CD8-positive, alpha-beta T cell (primary cell): ENCODE measurements at regions of chr10 and their contacts with region 1.

Region 1: DNA sequence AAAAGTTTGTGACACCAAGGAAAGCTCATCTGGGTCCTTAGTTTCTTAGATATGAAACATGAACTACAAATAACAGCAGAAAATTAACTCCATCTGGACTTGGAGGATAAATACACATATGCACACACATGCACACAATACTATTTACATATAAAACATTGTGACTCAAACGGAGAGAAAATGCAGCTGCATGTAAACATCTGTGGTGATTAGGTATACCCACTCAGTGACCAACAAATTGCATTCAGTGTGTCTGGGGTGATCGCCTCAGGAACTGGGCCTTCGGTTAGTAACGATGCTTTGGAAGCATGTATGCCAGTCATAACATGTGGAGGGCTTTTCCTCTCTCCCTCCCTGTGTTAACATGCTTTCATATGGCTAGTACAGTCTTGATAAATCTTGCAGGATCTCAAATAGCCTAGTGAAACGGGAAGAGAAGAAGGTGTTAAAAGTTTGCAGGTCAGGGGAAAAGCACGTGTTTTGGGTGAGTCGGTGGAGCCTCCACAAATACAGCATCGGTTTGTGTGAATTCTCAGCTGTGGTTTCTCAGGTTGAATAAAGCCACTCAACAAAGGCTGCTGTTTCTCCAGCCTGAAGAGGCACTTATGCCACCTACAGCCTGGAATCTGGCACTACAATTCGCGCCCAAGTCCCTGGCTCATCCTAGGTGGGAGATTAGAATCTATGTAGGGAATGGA is 8.7 kb upstream of the GLRX3 start:
- DNase-seq: peak; percentile 16 to 80 (median 50)
- ATAC-seq: peak; percentile 95
- H3K4me3 ChIP-seq: no peak overlapping the region
- H3K4me3 Mint-ChIP-seq: no peak overlapping the region
- H3K27ac ChIP-seq: no peak overlapping the region
- H3K27ac Mint-ChIP-seq: no peak overlapping the region
- H3K4me1 ChIP-seq: peaks cover 4% of the 10 kb centered on the region
- H3K4me1 Mint-ChIP-seq: peaks cover 7% of the 10 kb centered on the region
- H3K27me3 ChIP-seq: no peaks in the 10 kb centered on the region
- H3K27me3 Mint-ChIP-seq: peaks cover 26% of the 10 kb centered on the region
- CTCF ChIP-seq: peak; percentile 75

Region 2: GRCh38 chr10:129580010-129580409 is 547.5 kb before region 1 on chr10:
- CTCF ChIA-PET with region 1: no interaction called
- POLR2A ChIA-PET with region 1: no interaction called
- intact Hi-C with region 1: no loop called
- DNase-seq: no peak
- ATAC-seq: no peak
- H3K4me3 ChIP-seq: no peak overlapping the region
- H3K4me3 Mint-ChIP-seq: no peak overlapping the region
- H3K27ac ChIP-seq: no peak overlapping the region
- H3K27ac Mint-ChIP-seq: no peak overlapping the region
- H3K4me1 ChIP-seq: no peaks in the 10 kb centered on the region
- H3K4me1 Mint-ChIP-seq: peaks cover 19% of the 10 kb centered on the region
- H3K27me3 ChIP-seq: no peaks in the 10 kb centered on the region
- H3K27me3 Mint-ChIP-seq: no peaks in the 10 kb centered on the region
- CTCF ChIP-seq: no peak

Region 3: GRCh38 chr10:129877773-129878371 is 249.6 kb before region 1 on chr10:
- CTCF ChIA-PET with region 1: interaction called, 18 read pairs
- POLR2A ChIA-PET with region 1: no interaction called
- intact Hi-C with region 1: loop called in 1 of 2 experiments (anchors 1 kb)
- DNase-seq: peak in 7 of 9 experiments; percentile 11 to 50 (median 35)
- ATAC-seq: no peak
- H3K4me3 ChIP-seq: no peak overlapping the region
- H3K4me3 Mint-ChIP-seq: no peak overlapping the region
- H3K27ac ChIP-seq: no peak overlapping the region
- H3K27ac Mint-ChIP-seq: no peak overlapping the region
- H3K4me1 ChIP-seq: no peaks in the 10 kb centered on the region
- H3K4me1 Mint-ChIP-seq: no peaks in the 10 kb centered on the region
- H3K27me3 ChIP-seq: no peaks in the 10 kb centered on the region
- H3K27me3 Mint-ChIP-seq: peaks cover 3% of the 10 kb centered on the region
- CTCF ChIP-seq: peak; percentile 55

Region 4: GRCh38 chr10:129888784-129889616 is 238.5 kb before region 1 on chr10:
- CTCF ChIA-PET with region 1: interaction called, 13 read pairs
- POLR2A ChIA-PET with region 1: no interaction called
- intact Hi-C with region 1: loop called in 1 of 2 experiments (anchors 2 kb)
- DNase-seq: peak; percentile 6 to 60 (median 37)
- ATAC-seq: peak; percentile 54
- H3K4me3 ChIP-seq: no peak overlapping the region
- H3K4me3 Mint-ChIP-seq: no peak overlapping the region
- H3K27ac ChIP-seq: no peak overlapping the region
- H3K27ac Mint-ChIP-seq: no peak overlapping the region
- H3K4me1 ChIP-seq: no peaks in the 10 kb centered on the region
- H3K4me1 Mint-ChIP-seq: no peaks in the 10 kb centered on the region
- H3K27me3 ChIP-seq: no peaks in the 10 kb centered on the region
- H3K27me3 Mint-ChIP-seq: no peaks in the 10 kb centered on the region
- CTCF ChIP-seq: peak; percentile 54

Region 5: DNA sequence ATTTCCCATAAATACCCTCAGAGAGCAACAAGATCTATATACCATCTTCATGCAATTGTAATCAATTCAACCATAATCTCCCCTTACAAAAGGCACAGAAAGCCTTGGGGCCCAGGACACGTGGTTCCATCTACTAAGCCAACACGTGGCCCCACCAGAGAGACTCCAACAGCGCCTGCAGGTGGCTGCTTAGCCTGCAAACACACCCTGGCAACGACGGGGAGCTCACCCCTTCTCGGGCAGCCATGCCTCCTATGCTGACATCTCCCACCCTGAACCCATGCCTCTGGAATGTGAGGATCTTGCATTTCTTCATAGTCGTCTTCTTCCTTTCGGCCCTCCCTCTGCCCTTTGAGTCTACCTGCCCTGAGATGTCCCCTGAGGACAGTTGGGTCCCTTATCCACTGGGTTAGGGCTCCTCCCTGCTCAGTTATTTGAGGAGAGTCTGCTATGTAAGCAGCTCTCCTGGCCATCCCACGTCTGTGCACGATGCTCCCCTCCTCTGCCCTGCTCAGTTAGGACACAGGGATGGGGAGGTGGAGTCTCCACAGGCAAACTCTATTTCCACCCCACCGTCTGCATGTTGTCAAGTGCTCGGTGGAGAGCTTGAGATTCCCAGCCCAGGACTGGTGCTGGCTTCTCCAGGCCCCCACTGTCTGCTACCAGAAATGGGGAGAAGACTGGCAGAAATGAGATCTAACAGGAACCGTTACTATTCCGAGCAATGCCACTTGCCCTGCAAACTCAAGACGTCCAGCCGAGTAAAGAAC is 200.0 kb before region 1 on chr10:
- CTCF ChIA-PET with region 1: no interaction called
- POLR2A ChIA-PET with region 1: no interaction called
- intact Hi-C with region 1: no loop called
- DNase-seq: no peak
- ATAC-seq: no peak
- H3K4me3 ChIP-seq: no peak overlapping the region
- H3K4me3 Mint-ChIP-seq: no peak overlapping the region
- H3K27ac ChIP-seq: no peak overlapping the region
- H3K27ac Mint-ChIP-seq: no peak overlapping the region
- H3K4me1 ChIP-seq: no peaks in the 10 kb centered on the region
- H3K4me1 Mint-ChIP-seq: no peaks in the 10 kb centered on the region
- H3K27me3 ChIP-seq: no peaks in the 10 kb centered on the region
- H3K27me3 Mint-ChIP-seq: no peaks in the 10 kb centered on the region
- CTCF ChIP-seq: no peak

Region 6: DNA sequence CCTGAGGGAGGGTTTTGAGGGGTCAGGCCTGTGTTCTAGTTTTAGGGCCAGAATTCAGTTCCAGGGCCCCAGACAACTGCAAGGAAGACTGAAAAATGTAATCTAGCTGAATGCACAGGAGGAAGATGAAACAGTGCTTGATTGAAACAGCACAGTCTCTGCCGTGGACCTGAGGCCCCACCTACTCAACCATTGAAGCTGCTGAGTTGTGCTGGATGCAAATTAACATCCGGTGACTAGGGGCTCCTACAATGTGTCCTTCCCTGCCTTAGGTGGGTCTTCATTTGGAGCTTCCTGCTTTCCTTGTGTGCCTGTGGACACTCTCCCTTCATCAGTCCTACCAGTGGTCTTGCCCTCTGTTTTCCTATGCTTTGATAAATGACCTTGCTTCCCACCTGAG is 14.4 kb after region 1 on chr10:
- CTCF ChIA-PET with region 1: interaction called, 17 read pairs
- POLR2A ChIA-PET with region 1: no interaction called
- intact Hi-C with region 1: no loop called
- DNase-seq: no peak
- ATAC-seq: peak; percentile 46
- H3K4me3 ChIP-seq: no peak overlapping the region
- H3K4me3 Mint-ChIP-seq: no peak overlapping the region
- H3K27ac ChIP-seq: no peak overlapping the region
- H3K27ac Mint-ChIP-seq: peak overlapping the region; percentile 53
- H3K4me1 ChIP-seq: peaks cover 29% of the 10 kb centered on the region
- H3K4me1 Mint-ChIP-seq: peaks cover 62% of the 10 kb centered on the region
- H3K27me3 ChIP-seq: no peaks in the 10 kb centered on the region
- H3K27me3 Mint-ChIP-seq: no peaks in the 10 kb centered on the region
- CTCF ChIP-seq: no peak

Region 7: DNA sequence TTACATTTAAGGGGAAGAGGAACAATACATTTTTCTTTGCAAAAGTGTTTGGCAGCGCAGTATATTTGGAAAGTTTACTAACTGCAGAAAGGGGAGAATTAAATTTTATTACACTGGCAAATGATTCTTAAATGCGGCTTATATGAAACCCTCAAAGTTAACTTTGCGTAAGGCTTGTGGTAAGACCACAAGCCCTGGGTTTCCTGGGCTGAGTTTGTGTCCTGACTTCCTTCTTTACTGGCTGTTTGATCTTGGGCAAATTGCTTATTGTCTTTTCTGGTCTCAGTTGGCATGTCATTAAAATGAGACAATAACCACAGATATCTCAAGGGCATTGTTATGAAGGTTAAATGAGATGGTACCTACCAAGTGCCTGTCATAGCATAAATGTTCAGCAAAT is 115.5 kb after region 1 on chr10:
- CTCF ChIA-PET with region 1: no interaction called
- POLR2A ChIA-PET with region 1: no interaction called
- intact Hi-C with region 1: no loop called
- DNase-seq: peak in 2 of 9 experiments; percentile 12 to 32
- ATAC-seq: no peak
- H3K4me3 ChIP-seq: no peak overlapping the region
- H3K4me3 Mint-ChIP-seq: no peak overlapping the region
- H3K27ac ChIP-seq: no peak overlapping the region
- H3K27ac Mint-ChIP-seq: no peak overlapping the region
- H3K4me1 ChIP-seq: peaks cover 12% of the 10 kb centered on the region
- H3K4me1 Mint-ChIP-seq: peaks cover 17% of the 10 kb centered on the region
- H3K27me3 ChIP-seq: peaks cover 0 to 2% of the 10 kb centered on the region in 2 experiments
- H3K27me3 Mint-ChIP-seq: peaks cover 26% of the 10 kb centered on the region
- CTCF ChIP-seq: no peak

Region 8: GRCh38 chr10:131280101-131280500 is 1152.6 kb after region 1 on chr10:
- CTCF ChIA-PET with region 1: no interaction called
- POLR2A ChIA-PET with region 1: no interaction called
- intact Hi-C with region 1: no loop called
- DNase-seq: no peak
- ATAC-seq: no peak
- H3K4me3 ChIP-seq: no peak overlapping the region
- H3K4me3 Mint-ChIP-seq: no peak overlapping the region
- H3K27ac ChIP-seq: no peak overlapping the region
- H3K27ac Mint-ChIP-seq: no peak overlapping the region
- H3K4me1 ChIP-seq: no peaks in the 10 kb centered on the region
- H3K4me1 Mint-ChIP-seq: no peaks in the 10 kb centered on the region
- H3K27me3 ChIP-seq: no peaks in the 10 kb centered on the region
- H3K27me3 Mint-ChIP-seq: no peaks in the 10 kb centered on the region
- CTCF ChIP-seq: no peak